ENCODE measurements at regions of chr18 and their contacts with region 1.

Region 1: GRCh38 chr18:36850530-36851201 is 21.7 kb downstream of the KIAA1328 start:
- DNase-seq: no peak
- H3K4me3 Mint-ChIP-seq: no peak overlapping the region
- H3K27ac Mint-ChIP-seq: no peak overlapping the region
- H3K4me1 Mint-ChIP-seq: no peaks in the 10 kb centered on the region
- H3K27me3 Mint-ChIP-seq: no peaks in the 10 kb centered on the region

Region 2: DNA sequence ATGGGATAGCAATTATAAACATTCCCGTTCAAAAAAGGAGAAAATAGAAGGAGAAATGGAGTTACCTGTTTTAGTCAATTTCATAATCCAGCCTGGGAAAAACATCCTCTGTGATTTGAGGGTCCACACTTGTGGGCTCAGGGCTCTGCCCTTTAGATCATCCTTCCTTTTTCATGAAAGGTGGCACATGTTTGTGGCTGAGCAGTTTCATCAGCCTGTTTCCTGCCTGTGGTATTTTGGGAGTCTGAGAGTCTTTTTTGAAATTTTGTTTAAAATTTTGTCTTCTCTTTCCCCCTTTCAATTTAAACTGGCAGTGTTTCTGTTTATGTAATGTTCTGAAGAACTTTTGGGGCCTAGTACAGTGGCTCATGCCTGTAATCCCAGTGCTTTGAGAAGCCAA is 62.2 kb after region 1 on chr18:
- intact Hi-C with region 1: loop called (anchors 10 kb)
- DNase-seq: no peak
- H3K4me3 Mint-ChIP-seq: no peak overlapping the region
- H3K27ac Mint-ChIP-seq: no peak overlapping the region
- H3K4me1 Mint-ChIP-seq: peaks cover 13% of the 10 kb centered on the region
- H3K27me3 Mint-ChIP-seq: no peaks in the 10 kb centered on the region

Region 3: DNA sequence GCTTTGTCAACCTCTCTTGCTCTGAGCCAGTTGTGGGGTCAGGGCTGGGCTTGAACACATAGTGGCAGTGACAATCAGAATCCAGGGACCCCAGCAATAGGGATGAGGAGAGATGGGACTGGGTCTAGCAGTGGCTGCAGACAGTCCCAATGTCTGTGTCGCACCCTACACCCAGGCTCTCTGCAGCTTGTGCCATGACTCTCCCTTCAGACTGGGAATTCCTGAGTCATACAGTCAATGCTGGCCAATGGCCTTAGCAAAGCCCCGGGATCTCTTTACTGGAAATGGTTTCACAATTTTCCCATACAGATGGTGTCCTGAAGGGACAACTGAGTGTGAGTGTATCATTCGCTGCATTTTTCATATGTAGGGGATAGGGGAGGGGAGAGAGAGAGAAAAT is 789.2 kb after region 1 on chr18:
- intact Hi-C with region 1: no loop called
- DNase-seq: peak; percentile 11
- H3K4me3 Mint-ChIP-seq: no peak overlapping the region
- H3K27ac Mint-ChIP-seq: no peak overlapping the region
- H3K4me1 Mint-ChIP-seq: no peaks in the 10 kb centered on the region
- H3K27me3 Mint-ChIP-seq: no peaks in the 10 kb centered on the region